ENCODE measurements at regions of chr5 and their contacts with region 1.

Region 1: GRCh38 chr5:147346006-147346561 is 111.3 kb downstream of the STK32A start:
- DNase-seq: no peak
- ATAC-seq: no peak
- H3K4me3 ChIP-seq: no peak overlapping the region
- H3K27ac ChIP-seq: no peak overlapping the region
- H3K4me1 ChIP-seq: peaks cover 31% of the 10 kb centered on the region
- H3K27me3 ChIP-seq: no peaks in the 10 kb centered on the region
- CTCF ChIP-seq: 0 out of 2 replicates have a peak, but pooled peaks have one; percentile 22

Region 2: DNA sequence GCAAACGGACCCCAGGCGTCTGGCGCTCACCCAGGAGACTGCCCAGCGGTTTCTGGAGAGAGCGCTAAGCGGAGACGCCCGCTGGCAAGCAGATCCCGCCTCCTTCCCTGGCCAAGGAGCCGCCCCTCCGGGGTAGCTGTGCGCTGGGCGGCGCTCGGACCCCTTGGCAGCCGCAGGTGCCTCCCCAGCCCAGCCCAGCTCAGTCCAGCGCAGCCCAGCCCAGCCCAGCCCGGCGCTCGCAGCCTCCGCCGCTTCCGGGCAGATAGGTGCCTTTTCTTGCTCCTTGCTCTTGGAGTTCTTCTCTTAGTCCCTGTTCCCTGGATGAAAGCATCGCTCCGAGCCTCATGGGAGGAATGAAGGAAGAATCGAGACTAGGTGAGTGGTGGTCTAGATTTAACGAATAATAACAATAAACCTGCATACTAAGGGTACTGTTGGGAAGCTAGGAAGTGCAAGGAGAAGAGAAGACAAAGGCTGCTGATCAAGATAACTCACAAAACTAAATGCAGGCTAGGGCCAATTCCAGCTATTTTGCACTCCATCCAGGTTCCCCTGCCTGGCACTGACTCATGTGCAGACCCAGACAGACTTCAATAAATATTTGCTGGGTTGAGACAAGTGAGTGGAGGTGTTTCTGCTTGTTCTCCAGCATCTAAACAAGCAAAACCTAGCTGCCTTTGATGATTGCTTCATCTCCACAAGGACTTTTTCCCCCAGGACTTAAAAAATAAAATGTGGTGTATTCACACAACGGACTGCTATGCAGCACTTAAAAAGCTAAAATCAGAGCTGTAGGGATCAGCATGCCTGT is 111.1 kb before region 1 on chr5 and contains the start of gene STK32A:
- CTCF ChIA-PET with region 1: no interaction called
- POLR2A ChIA-PET with region 1: no interaction called
- intact Hi-C with region 1: loop called (anchors 5 kb)
- DNase-seq: peak; percentile 65
- ATAC-seq: peak; percentile 98
- H3K4me3 ChIP-seq: peak within 1 kb of the TSS; percentile 76
- H3K27ac ChIP-seq: no peak within 1 kb of the TSS
- H3K4me1 ChIP-seq: no peaks in the 10 kb centered on the region
- H3K27me3 ChIP-seq: no peaks in the 10 kb centered on the region
- CTCF ChIP-seq: peak; percentile 28; the same call in 1 of the 2 replicates
- total RNA-seq, gene STK32A: 0.92 and 6.8 TPM in 2 replicates

Region 3: DNA sequence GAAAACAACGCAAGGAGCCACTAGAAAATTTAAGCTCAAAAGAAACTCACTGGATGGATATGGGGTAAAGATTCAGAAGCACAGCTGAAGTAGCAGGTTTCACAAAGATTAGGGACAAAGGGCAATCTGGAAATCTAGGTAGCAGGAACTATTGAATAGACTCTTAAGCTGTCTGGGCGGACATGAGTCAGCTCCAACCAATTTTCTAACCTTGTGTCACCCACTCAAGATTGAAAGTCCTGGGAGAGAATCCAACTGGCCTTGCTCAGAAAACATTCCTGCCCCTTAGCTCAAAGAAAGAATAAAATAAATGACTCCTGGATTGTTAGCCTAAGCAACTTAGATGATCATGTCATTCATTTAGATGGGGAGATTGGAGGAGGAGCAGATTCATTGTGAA is 42.1 kb before region 1 on chr5:
- CTCF ChIA-PET with region 1: no interaction called
- POLR2A ChIA-PET with region 1: no interaction called
- intact Hi-C with region 1: loop called (anchors 5 kb)
- DNase-seq: peak; percentile 88
- ATAC-seq: peak; percentile 92
- H3K4me3 ChIP-seq: peak overlapping the region; percentile 47
- H3K27ac ChIP-seq: peak overlapping the region; percentile 94
- H3K4me1 ChIP-seq: peaks cover 31% of the 10 kb centered on the region
- H3K27me3 ChIP-seq: no peaks in the 10 kb centered on the region
- CTCF ChIP-seq: no peak

Region 4: DNA sequence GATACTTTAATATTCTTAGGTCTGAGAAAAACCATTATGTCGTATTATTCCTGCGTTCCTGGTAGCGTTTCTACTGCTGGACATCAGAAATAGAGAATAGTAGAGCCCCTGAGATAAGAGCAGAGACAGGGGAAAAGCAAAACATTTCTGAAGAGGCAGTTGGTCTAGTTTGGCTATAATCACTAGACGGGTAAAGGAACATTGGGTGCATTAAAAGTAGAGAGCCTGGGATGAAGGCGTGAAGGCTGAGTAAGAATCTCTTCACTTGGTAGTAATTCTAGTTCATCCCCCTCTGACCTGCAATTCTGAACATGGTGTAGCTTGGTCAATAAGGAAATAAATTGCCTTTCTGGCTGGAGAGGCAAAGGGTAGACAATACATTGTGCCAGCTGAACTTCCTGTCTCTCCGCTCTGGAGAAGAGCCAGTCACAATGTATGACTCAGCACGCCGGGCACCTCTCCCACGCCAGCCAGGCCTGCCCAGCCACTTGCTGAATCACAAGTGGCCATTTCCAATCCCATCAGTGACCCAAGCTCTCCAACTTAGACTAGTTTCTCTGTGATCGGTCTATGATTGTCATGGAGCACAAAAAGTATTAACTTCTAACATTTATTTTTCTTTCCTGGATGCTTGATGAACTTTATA is 35.9 kb before region 1 on chr5:
- CTCF ChIA-PET with region 1: no interaction called
- POLR2A ChIA-PET with region 1: no interaction called
- intact Hi-C with region 1: loop called (anchors 2 kb)
- DNase-seq: peak; percentile 91
- ATAC-seq: peak; percentile 93
- H3K4me3 ChIP-seq: no peak overlapping the region
- H3K27ac ChIP-seq: peak overlapping the region; percentile 89
- H3K4me1 ChIP-seq: peaks cover 30% of the 10 kb centered on the region
- H3K27me3 ChIP-seq: no peaks in the 10 kb centered on the region
- CTCF ChIP-seq: no peak

Region 5: DNA sequence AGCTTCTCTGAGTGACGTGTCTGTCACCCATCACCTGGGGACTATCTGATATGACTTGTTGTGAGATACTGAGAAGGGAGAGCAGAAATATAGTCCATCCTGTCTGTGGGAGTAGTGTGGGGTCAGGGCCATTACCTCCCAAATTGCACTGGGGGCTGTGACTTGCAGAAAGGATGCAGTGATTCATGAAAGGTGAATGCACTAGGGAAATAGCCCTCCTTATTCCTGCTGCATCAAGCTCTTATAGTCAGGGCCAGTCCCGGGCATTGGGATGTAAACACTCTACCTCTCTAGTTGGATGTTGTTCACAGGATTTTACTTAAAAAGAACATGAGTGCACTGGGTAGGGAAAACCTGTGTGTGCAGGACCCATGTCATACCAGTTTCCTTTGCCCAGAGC is 13.5 kb after region 1 on chr5:
- CTCF ChIA-PET with region 1: no interaction called
- POLR2A ChIA-PET with region 1: no interaction called
- intact Hi-C with region 1: loop called (anchors 1 kb)
- DNase-seq: peak; percentile 8
- ATAC-seq: peak; percentile 27
- H3K4me3 ChIP-seq: no peak overlapping the region
- H3K27ac ChIP-seq: no peak overlapping the region
- H3K4me1 ChIP-seq: peaks cover 35% of the 10 kb centered on the region
- H3K27me3 ChIP-seq: no peaks in the 10 kb centered on the region
- CTCF ChIP-seq: no peak

Measured in PC-3 (cell line).